AG04449 (cell line): ENCODE measurements at regions of chr6 and their contacts with region 1.

Region 1: GRCh38 chr6:106997390-106998158 is 23.0 kb upstream of the CD24 start:
- DNase-seq: peak; percentile 7
- H3K4me3 ChIP-seq: no peak overlapping the region
- CTCF ChIP-seq: peak; percentile 73

Region 2: DNA sequence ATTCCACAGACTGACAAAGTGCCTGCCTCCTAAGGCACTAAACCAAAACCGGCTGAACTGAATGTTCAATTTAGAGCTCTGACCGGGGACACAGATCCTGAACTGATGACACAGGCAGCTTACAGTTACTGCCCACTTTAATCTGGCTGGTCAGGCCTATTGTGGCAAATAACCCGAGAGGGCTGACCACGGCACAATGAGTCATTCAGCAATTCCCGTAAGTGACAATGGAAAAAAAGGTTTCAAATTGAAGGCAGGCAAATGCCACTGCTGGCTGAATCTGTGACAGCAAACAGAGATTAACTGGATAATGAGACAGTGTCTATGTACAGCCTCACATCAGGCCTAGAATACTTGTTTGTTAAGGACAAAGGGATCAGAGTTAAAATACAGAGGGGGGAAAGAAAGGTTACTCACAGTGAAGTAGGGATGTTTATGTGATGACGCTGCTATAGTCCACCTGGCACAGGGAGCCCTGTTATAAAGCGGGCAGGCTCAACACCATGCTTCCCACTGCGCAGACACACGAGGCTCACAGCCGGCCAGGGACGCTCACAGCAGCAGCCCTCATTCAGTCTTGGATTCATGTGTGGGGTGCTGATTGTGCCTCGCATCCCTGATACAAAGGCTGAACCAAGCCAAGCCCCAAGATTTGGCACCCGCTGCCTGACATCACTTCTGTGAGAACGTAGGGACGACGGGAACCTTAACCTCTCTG is 422.7 kb before region 1 on chr6:
- CTCF ChIA-PET with region 1: interaction called, 10 read pairs
- POLR2A ChIA-PET with region 1: no interaction called
- DNase-seq: no peak
- H3K4me3 ChIP-seq: no peak overlapping the region
- CTCF ChIP-seq: no peak

Region 3: DNA sequence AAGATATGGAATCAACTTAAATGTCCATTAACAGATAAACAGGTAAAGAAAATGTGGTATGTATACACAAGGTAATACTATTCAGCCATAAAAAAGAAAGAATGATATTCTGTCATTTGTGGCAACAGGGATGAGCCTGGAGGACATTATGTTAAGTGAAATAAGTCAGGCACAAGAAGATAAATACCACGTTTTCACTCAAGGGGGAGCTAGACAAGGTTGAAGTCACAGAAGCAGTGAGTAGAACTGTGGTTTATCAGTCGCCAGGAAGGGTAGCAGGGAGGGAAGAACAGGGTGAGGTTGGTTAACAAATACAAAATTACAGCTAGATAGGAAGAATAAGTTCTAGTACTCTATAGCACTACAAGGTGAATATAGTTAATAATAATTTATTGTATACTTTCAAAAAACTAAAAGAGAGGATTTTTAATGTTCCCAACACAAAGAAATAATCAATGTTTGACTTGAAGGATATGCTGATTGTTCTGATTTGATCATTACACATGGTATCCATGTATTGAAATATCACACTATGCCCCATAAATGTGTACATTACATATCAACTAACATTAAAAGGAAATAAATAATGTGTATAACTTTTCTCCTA is 389.4 kb before region 1 on chr6:
- CTCF ChIA-PET with region 1: interaction called, 22 read pairs
- POLR2A ChIA-PET with region 1: no interaction called
- DNase-seq: no peak
- H3K4me3 ChIP-seq: no peak overlapping the region
- CTCF ChIP-seq: peak; percentile 58

Region 4: DNA sequence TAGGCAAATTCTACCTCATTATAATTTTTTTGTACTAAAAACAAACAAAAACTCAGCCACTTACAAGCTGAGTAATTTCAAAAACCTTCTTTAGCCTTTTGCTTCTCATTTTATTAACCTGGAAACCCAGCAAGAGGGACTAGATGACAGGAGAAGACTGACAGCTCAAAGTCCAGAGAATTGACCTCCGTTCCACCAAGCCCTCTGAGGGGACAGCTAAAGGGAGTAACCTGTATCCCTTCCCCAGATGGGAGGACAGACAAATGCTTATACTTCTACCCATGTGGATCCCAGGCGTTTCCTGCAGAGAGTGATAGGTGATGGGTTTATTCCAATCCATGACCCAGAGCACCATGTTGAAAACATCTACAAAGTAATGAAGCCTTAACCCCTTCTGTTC is 11.9 kb after region 1 on chr6:
- CTCF ChIA-PET with region 1: interaction called, 25 read pairs
- POLR2A ChIA-PET with region 1: no interaction called
- DNase-seq: no peak
- H3K4me3 ChIP-seq: no peak overlapping the region
- CTCF ChIP-seq: no peak